ENCODE measurements at regions of chr1 and their contacts with region 1.

Region 1: GRCh38 chr1:52056163-52056936 is at the start of gene BTF3L4:
- DNase-seq: peak; percentile 96
- H3K4me3 Mint-ChIP-seq: peak within 1 kb of the TSS; percentile 88
- H3K27ac Mint-ChIP-seq: peak within 1 kb of the TSS; percentile 94
- H3K4me1 Mint-ChIP-seq: peaks cover 61% of the 10 kb centered on the region
- H3K27me3 Mint-ChIP-seq: no peaks in the 10 kb centered on the region
- total RNA-seq, gene BTF3L4: 35.0 to 38.1 TPM

Region 2: DNA sequence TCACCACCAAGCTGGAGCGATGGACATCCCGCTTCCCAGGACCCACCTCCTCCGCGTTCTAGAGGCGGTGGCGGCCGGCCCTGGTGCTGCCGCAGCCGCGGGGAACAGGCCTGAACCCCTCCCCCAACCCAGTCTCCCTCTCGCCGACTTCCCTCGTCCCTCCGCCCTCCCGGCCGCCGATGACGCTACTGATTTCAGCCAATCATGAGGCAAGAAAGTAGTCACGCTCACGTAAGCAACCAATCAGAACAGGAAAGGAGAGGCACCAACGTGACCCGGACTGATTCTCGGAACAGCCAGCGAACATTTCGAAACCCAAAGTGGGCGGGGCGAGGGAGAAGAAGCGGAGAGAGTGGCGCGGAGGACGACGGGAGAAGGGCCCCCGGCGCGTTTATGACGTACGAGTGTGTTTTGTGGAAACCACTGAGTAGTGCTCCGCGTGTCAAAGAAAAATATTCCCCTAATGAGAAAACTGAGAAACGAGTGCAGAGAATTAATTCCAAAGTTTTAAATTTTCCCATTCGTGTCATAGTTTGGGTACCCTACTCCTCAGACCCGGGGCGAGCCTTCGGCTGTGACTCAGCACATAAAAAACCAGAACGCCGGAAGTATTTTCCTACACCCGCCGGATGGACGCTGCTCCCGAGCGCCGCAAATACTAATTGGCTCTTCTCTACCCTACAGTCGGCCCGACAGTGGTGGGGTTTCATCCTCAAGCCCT is 177.6 kb before region 1 on chr1 and contains the start of gene NRDC:
- CTCF ChIA-PET with region 1: no interaction called
- POLR2A ChIA-PET with region 1: interaction called, 10 read pairs
- DNase-seq: peak; percentile 100
- H3K4me3 Mint-ChIP-seq: no peak within 1 kb of the TSS
- H3K27ac Mint-ChIP-seq: no peak within 1 kb of the TSS
- H3K4me1 Mint-ChIP-seq: peaks cover 28% of the 10 kb centered on the region
- H3K27me3 Mint-ChIP-seq: peaks cover 17% of the 10 kb centered on the region
- total RNA-seq, gene NRDC: 162 to 164 TPM

Region 3: DNA sequence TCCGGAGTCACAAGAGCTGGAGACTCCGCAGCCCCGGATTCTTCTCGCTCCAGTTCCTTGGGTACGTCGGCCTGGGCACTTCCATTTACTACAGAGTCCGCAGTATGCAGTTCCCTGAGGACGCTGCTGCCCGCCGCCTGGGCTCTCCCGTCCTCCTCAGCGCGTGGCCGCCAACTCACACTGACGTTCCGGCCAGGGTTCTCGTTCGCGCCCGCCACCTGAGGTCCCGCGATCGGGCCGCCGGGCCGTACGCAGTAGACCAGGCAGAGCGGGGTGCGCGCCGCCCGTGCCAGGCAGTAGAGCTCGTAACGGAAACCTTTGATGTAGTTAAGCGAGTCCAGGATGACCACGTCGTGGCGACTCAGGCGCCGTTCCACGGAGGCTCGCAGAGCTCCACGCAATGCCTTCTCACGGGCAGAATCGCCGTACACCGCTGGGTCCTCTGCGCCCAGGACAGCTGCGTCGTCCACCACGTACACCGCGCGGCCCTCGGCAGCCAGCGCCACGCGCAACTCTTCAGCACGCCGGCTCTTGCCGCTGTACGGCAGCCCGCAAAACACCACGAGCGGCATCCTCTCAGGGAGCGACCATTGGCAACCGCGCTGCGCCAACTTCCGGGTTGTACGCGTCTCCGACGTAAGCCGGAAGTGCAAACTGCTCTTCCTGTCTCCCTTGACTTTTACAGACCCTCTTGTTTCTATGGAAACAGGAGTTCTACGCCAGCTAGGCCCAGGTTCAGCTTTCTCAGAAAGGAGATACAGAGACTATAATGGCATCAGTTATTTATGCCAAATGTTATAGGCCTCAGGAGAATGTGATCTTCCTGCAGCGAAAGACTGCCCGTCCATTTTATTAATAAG is 22.9 kb before region 1 on chr1 and contains the start of gene KTI12:
- CTCF ChIA-PET with region 1: interaction called, 5 read pairs
- POLR2A ChIA-PET with region 1: interaction called, 64 read pairs
- DNase-seq: peak; percentile 91
- H3K4me3 Mint-ChIP-seq: peak within 1 kb of the TSS; percentile 89
- H3K27ac Mint-ChIP-seq: peak within 1 kb of the TSS; percentile 90
- H3K4me1 Mint-ChIP-seq: peaks cover 34% of the 10 kb centered on the region
- H3K27me3 Mint-ChIP-seq: no peaks in the 10 kb centered on the region
- total RNA-seq, gene KTI12: 11.3 to 11.5 TPM

Region 4: GRCh38 chr1:52365746-52366516 is 309.6 kb after region 1 on chr1 and contains the start of gene CC2D1B:
- CTCF ChIA-PET with region 1: interaction called, 3 read pairs
- POLR2A ChIA-PET with region 1: interaction called, 11 read pairs
- DNase-seq: peak; percentile 100
- H3K4me3 Mint-ChIP-seq: peak within 1 kb of the TSS; percentile 97
- H3K27ac Mint-ChIP-seq: peak within 1 kb of the TSS; percentile 96
- H3K4me1 Mint-ChIP-seq: peaks cover 46% of the 10 kb centered on the region
- H3K27me3 Mint-ChIP-seq: no peaks in the 10 kb centered on the region
- total RNA-seq, gene CC2D1B: 43.8 to 46.9 TPM